ENCODE measurements at regions of chr7 and their contacts with region 1.

Region 1: DNA sequence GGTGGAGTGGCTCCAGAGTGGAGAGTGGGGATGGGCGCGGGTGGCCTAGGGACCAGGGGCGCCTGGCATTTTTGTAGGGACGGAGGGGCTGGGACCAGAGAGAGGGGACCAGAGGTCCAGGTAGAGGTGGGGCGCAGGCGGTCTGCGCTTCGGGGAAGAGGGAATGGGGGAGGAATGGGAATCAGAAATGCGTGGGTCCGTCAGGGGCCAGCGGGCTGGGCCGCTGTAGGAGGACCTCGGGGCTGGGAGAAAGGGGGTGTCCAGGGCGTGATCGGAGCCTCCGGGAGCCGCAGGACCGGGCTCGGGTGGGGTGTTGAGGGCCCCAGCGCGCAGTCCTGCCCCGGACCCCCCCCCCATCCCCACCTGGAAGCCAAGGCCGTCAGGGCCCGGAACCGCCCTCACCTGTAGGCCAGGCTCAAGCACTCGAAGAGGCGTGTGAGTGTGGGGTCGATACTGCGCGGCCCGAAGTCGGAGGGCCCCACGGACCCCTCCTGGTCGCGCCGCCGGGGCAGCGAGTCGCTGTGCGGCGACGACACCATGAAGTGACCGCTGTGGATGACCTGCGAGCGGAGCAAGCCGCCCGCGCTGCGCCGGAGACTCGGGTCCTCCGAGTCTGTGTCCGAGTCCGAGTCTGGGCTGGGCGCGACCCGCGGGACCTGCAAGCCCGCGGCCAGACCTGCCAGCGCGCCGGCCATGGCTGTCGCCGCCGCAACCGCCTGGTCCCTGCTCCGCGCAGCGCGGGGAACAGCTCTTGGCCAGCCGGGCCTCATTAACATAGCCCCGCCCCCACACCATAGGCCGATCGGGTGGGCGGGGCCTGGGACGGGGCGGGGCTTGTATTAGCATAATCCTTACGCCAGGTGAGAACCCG is at the start of gene MLXIPL:
- DNase-seq: peak; percentile 96 to 99 (median 99)
- ATAC-seq: peak; percentile 93
- H3K4me3 ChIP-seq: peak within 1 kb of the TSS; percentile 68
- H3K27ac ChIP-seq: peak within 1 kb of the TSS; percentile 76; the same call in 2 of the 3 replicates
- H3K4me1 ChIP-seq: peaks cover 19 to 27% of the 10 kb centered on the region in 2 experiments
- H3K27me3 ChIP-seq: peaks cover 13 to 26% of the 10 kb centered on the region in 2 experiments
- CTCF ChIP-seq: no peak
- EP300 ChIP-seq: no peak
- POLR2A ChIP-seq: peak; percentile 82
- RAD21 ChIP-seq: no peak
- polyA plus RNA-seq, gene MLXIPL: 0.11 to 0.17 TPM

Region 2: DNA sequence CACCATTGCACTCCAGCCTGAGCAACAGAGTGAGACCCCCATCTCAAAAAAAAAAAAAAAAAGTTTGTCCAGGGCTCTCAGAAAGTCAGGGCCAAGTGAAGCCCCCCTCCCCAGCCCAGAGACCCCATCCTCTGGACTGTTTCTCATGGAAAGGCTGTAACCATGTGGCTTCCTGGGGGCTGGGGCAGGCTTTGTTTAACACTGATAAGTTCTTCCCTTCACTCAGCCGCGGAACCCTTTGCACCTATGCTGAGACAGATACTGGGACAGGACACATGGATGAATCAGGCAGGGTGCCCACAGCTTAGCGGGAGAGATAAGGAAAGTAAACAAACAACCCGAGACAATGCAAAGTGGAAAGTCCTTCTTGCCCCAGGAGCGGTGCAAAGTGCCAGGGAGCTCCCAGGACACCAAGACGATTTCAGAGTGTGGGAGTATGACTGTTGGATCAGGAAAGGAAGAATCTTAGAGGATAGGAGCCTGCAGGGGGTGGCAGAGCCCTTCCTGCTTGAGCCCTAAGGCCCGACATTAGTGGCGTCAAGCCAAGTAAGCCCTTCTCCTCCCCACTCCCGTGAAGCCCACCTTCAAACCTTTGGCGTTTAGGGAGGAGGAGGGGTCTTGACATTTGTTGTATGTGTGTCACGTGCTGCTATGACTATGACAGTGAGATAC is 11.3 kb before region 1 on chr7:
- CTCF ChIA-PET with region 1: no interaction called
- POLR2A ChIA-PET with region 1: interaction called, 12 read pairs
- in situ Hi-C with region 1: no loop called
- intact Hi-C with region 1: no loop called
- DNase-seq: peak; percentile 73 to 94 (median 82)
- ATAC-seq: peak; percentile 85
- H3K4me3 ChIP-seq: no peak overlapping the region
- H3K27ac ChIP-seq: peak overlapping the region; percentile 8; the same call in 1 of the 3 replicates
- H3K4me1 ChIP-seq: peaks cover 22 to 30% of the 10 kb centered on the region in 2 experiments
- H3K27me3 ChIP-seq: no peaks in the 10 kb centered on the region
- CTCF ChIP-seq: peak; percentile 50 to 71 (median 70)
- EP300 ChIP-seq: peak; percentile 88
- POLR2A ChIP-seq: no peak
- RAD21 ChIP-seq: peak; percentile 78 to 81

Region 3: GRCh38 chr7:73647725-73648592 is 23.9 kb after region 1 on chr7:
- CTCF ChIA-PET with region 1: no interaction called
- POLR2A ChIA-PET with region 1: interaction called, 11 read pairs
- in situ Hi-C with region 1: no loop called
- intact Hi-C with region 1: no loop called
- DNase-seq: peak in 2 of 4 experiments; percentile 80 to 83
- ATAC-seq: peak; percentile 78
- H3K4me3 ChIP-seq: peak overlapping the region; percentile 31
- H3K27ac ChIP-seq: no peak overlapping the region
- H3K4me1 ChIP-seq: peaks cover 0 to 14% of the 10 kb centered on the region in 2 experiments; a peak in 2 of 5 replicates
- H3K27me3 ChIP-seq: peaks cover 34 to 77% of the 10 kb centered on the region in 2 experiments
- CTCF ChIP-seq: peak in 2 of 3 experiments; percentile 32 to 48; a peak in 3 of 6 replicates
- EP300 ChIP-seq: no peak
- POLR2A ChIP-seq: no peak
- RAD21 ChIP-seq: peak in 1 of 2 experiments; percentile 30; a peak in 2 of 4 replicates